Left colon (tissue), 2 donors: ENCODE measurements at regions of chr18 and their contacts with region 1.

Region 1: GRCh38 chr18:14086458-14087231 is 45.6 kb downstream of the ZNF519 start:
- DNase-seq: no peak
- ATAC-seq: peak; percentile 81

Region 2: DNA sequence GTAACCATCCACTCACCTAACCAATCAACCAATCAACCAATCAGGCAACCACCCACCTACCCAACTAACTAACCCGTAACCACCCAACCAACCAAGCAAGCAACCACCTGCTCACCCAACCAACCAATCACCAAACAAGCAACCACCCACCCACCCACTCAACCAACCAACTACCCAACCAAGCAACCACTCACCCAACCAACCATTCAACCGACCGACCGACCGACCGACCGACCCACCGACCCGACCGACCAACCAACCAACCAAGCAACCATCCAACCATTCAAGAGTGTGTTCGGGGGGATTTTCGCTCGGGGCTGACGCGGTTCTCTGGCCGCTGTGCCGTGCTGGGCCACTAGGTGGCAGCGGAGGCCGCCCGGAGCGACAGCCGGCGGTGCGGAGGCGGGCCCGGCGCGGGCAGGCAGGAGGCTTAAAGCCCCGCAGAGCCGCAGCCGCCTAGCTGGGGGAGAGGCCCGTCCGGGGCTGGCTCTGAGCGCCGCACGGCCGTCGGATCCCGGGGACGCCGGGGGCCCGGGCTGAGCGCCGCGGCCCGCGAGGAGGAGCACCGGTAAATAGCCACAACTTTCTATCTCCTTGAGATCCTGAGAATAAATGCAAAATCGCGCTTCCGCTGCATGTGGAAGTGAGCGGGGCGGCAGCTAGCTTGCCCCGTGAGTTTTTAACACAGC is 262.8 kb before region 1 on chr18 and contains the start of gene MC5R:
- intact Hi-C with region 1: loop called in 1 of 2 experiments (anchors 10 kb)
- DNase-seq: peak in 1 of 2 donors; percentile 70
- ATAC-seq: peak; percentile 96
- total RNA-seq, gene MC5R: not detected

Region 3: GRCh38 chr18:14026199-14026598 is 60.4 kb before region 1 on chr18:
- intact Hi-C with region 1: no loop called
- DNase-seq: no peak
- ATAC-seq: peak; percentile 82

Region 4: GRCh38 chr18:14117606-14118005 is 31.0 kb after region 1 on chr18:
- intact Hi-C with region 1: no loop called
- DNase-seq: no peak
- ATAC-seq: no peak